Sigmoid colon (tissue), 7 donors: ENCODE measurements at regions of chr3 and their contacts with region 1.

Region 1: GRCh38 chr3:177441813-177442646 is 244.7 kb upstream of the TBL1XR1 start:
- DNase-seq: peak; percentile 82
- H3K4me3 ChIP-seq: peak overlapping the region; percentile 15 to 50 (median 35)
- H3K27ac ChIP-seq: peak overlapping the region; percentile 80 to 88 (median 81)
- H3K4me1 ChIP-seq: peaks cover 0 to 74% (median 57%) of the 10 kb centered on the region in 4 donors
- H3K27me3 ChIP-seq: no peaks in the 10 kb centered on the region
- CTCF ChIP-seq: no peak
- EP300 ChIP-seq: no peak
- POLR2A ChIP-seq: no peak

Region 2: GRCh38 chr3:177516158-177517011 is 74.4 kb after region 1 on chr3:
- intact Hi-C with region 1: loop called (anchors 5 kb)
- DNase-seq: no peak
- H3K4me3 ChIP-seq: no peak overlapping the region
- H3K27ac ChIP-seq: peak overlapping the region; percentile 44 to 75 (median 68)
- H3K4me1 ChIP-seq: peaks cover 0 to 44% (median 40%) of the 10 kb centered on the region in 4 donors
- H3K27me3 ChIP-seq: no peaks in the 10 kb centered on the region
- CTCF ChIP-seq: no peak
- EP300 ChIP-seq: no peak
- POLR2A ChIP-seq: no peak

Region 3: DNA sequence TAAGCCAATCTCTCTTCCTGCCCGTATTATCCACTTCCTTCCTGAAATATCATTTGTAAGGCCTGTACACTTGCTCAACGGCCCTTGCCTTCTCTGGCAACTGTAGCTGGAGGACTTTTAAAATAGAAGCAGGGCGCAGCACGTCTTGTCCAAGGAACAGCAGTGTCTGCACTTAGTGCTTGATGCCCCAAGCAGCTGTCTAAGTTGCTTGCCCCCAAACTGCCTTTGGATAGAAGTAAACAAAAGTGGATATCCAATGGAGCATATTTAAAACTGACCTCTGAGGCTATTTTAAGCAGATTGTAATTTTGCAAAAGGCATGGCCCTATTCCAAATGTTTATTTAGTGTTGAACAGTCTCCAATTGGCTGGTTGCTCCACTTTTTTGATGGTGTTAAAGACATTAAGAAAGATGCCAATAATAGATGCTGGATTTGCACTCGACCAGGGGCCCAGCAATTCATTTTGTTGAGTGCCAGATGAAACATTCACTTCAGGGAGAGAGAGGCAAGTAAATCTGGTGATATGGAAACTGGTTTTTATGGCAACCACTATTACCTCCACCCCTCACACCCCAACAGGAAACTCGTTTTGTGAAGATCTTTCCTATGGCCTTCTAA is 282.1 kb after region 1 on chr3:
- intact Hi-C with region 1: loop called (anchors 5 kb)
- DNase-seq: peak; percentile 89
- H3K4me3 ChIP-seq: no peak overlapping the region
- H3K27ac ChIP-seq: peak overlapping the region; percentile 59 to 71 (median 68)
- H3K4me1 ChIP-seq: peaks cover 0 to 51% (median 42%) of the 10 kb centered on the region in 4 donors
- H3K27me3 ChIP-seq: no peaks in the 10 kb centered on the region
- CTCF ChIP-seq: no peak
- EP300 ChIP-seq: peak in 2 of 4 donors; percentile 34 to 52
- POLR2A ChIP-seq: no peak